MCF 10A (cell line): ENCODE measurements at regions of chr14 and their contacts with region 1.

Region 1: DNA sequence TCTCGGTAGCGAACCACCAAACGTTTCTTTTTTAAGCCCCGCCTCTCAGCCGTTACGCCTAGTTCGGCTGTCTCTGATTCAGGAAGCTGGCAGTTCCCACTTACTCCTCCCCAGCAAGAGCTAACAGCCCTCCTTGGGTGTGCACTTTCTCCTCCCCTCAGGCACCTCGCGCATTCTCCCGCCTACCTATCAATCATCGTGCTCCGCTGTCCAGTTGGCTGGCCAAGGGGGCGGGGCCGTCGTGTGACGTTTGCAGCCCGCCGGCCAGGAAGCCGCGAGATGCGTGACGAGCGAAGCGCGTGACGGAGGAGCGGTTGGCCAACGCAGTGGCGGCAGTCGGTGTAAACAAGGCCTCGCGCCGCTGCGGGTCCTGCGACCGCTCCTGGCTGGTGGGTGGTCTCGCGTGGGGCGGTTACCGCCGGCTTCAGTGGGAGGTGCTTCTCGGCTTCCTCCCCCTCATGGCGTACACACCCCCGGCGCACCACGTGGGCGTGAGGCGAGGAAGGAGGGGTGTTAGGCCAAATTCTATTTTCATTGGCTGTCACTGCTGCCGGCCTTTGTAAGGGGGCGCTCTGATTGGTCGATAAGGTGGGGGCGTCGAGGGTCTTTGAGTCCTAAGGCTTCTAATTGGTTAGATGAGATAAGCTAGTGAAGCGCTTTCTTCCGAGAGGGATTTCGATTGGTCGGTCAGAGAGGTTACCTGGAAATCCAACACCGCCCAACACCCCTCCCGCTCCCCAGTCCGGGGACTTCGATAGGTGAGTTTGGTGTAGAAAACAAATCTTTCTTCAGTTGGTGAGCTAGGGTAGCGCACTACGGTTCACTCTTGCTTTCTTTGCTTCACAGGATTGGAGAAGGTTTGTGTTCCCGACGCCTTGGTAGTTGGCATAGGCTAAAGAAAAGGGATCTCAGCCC is at the starts of genes DCAF11 and NRL:
- DNase-seq: peak; percentile 100
- H3K4me3 Mint-ChIP-seq: peak within 1 kb of the TSS; percentile 97
- H3K27ac Mint-ChIP-seq: peak within 1 kb of the TSS; percentile 99
- H3K4me1 Mint-ChIP-seq: peaks cover 9% of the 10 kb centered on the region
- H3K27me3 Mint-ChIP-seq: no peaks in the 10 kb centered on the region
- CTCF ChIP-seq: no peak
- total RNA-seq, gene DCAF11: 38.6 and 48.8 TPM in 2 replicates
- total RNA-seq, gene NRL: 1.3 and 2.1 TPM in 2 replicates

Region 2: GRCh38 chr14:23320774-23321571 is 793.8 kb before region 1 on chr14 and contains the start of gene PABPN1:
- CTCF ChIA-PET with region 1: no interaction called
- POLR2A ChIA-PET with region 1: interaction called, 11 read pairs
- intact Hi-C with region 1: no loop called
- DNase-seq: peak; percentile 100
- H3K4me3 Mint-ChIP-seq: peak within 1 kb of the TSS; percentile 84
- H3K27ac Mint-ChIP-seq: peak within 1 kb of the TSS; percentile 97
- H3K4me1 Mint-ChIP-seq: peaks cover 11% of the 10 kb centered on the region
- H3K27me3 Mint-ChIP-seq: no peaks in the 10 kb centered on the region
- CTCF ChIP-seq: no peak
- total RNA-seq, gene PABPN1: 153 and 167 TPM in 2 replicates

Region 3: GRCh38 chr14:24141097-24141880 is 26.5 kb after region 1 on chr14 and contains the start of gene EMC9:
- CTCF ChIA-PET with region 1: interaction called, 9 read pairs
- POLR2A ChIA-PET with region 1: interaction called, 252 read pairs
- intact Hi-C with region 1: loop called (anchors 2 kb)
- DNase-seq: peak; percentile 100
- H3K4me3 Mint-ChIP-seq: peak within 1 kb of the TSS; percentile 93
- H3K27ac Mint-ChIP-seq: peak within 1 kb of the TSS; percentile 64
- H3K4me1 Mint-ChIP-seq: peaks cover 21% of the 10 kb centered on the region
- H3K27me3 Mint-ChIP-seq: no peaks in the 10 kb centered on the region
- CTCF ChIP-seq: peak; percentile 14
- total RNA-seq, gene EMC9: 49.2 and 49.9 TPM in 2 replicates

Region 4: DNA sequence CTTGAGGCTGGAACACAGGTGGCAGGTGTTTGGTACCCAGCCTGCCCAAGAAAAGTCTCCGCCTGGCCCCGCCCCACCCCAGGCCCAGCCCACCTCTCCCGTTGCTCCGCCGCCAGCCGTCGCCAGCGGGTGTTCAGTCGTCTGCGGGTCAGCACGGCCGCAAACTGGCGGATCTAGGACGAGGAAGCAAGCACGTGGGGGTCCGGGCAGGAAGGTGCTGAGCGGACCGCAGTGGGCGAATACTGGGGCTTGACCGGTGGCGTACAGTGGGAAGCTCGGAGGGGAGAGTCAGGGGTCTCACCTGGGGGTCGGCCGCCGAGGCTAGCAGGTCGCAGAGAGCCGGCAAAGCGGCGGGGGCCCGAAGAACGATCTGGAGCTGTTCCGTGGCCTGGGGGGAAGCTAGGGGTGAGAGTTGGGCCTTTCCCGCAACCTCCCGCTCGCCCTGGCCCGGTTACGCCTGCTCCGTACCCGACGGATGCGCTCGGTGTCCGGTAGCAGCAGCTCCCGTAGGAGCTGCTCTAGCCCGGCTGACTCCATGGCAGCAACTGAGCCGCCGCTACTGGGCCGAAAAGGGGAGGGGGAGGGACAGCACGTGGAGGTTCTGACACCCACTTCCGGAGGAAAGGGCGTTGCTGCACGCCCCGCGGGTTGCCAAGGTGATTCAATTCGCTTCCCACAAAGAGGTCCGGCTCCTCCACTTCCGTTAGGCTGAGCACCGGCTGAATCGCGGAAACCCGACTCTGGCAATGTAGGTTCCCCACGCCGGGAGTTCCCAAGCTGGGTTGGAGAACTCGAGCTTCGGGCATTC is 73.7 kb after region 1 on chr14 and contains the start of gene IPO4:
- CTCF ChIA-PET with region 1: no interaction called
- POLR2A ChIA-PET with region 1: interaction called, 13 read pairs
- intact Hi-C with region 1: no loop called
- DNase-seq: peak; percentile 97
- H3K4me3 Mint-ChIP-seq: peak within 1 kb of the TSS; percentile 81
- H3K27ac Mint-ChIP-seq: peak within 1 kb of the TSS; percentile 84
- H3K4me1 Mint-ChIP-seq: peaks cover 12% of the 10 kb centered on the region
- H3K27me3 Mint-ChIP-seq: no peaks in the 10 kb centered on the region
- CTCF ChIP-seq: no peak
- total RNA-seq, gene IPO4: 57.2 and 100 TPM in 2 replicates

Region 5: GRCh38 chr14:24215495-24216344 is 100.9 kb after region 1 on chr14 and contains the start of gene MDP1:
- CTCF ChIA-PET with region 1: interaction called, 3 read pairs
- POLR2A ChIA-PET with region 1: interaction called, 29 read pairs
- intact Hi-C with region 1: no loop called
- DNase-seq: peak; percentile 87
- H3K4me3 Mint-ChIP-seq: peak within 1 kb of the TSS; percentile 80
- H3K27ac Mint-ChIP-seq: peak within 1 kb of the TSS; percentile 73
- H3K4me1 Mint-ChIP-seq: peaks cover 20% of the 10 kb centered on the region
- H3K27me3 Mint-ChIP-seq: no peaks in the 10 kb centered on the region
- CTCF ChIP-seq: peak; percentile 25
- total RNA-seq, gene MDP1: 11.0 and 20.2 TPM in 2 replicates

Region 6: DNA sequence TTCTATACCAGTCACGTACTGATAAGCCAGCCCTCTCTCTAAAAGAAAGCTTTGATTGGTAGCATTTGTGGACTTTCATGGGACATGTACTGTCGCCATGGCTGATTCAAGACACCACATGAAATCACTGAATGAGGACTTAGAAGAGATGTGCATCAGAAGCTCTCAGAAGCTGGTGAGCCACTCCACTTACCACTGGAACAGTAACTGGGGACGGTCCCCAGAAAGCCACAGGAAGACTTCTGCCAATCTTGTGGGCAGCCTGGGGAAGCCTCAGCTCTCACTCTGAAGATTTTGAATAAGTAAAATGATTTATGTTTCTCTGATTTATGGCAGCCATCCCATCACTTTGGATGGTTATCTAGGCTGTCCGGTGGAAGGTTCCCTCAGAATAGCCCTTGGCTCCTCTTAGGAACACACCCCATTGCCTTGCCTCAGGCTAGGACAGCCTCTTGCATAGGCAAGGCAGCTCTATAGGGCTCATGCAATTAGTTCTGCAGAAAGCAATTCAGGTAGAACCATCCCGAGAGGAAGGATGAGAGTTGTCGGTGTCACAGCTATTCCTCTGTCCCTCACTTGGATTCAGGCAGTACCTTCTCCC is 175.0 kb after region 1 on chr14:
- CTCF ChIA-PET with region 1: no interaction called
- POLR2A ChIA-PET with region 1: no interaction called
- intact Hi-C with region 1: no loop called
- DNase-seq: no peak
- H3K4me3 Mint-ChIP-seq: no peak overlapping the region
- H3K27ac Mint-ChIP-seq: peak overlapping the region; percentile 73
- H3K4me1 Mint-ChIP-seq: peaks cover 13% of the 10 kb centered on the region
- H3K27me3 Mint-ChIP-seq: no peaks in the 10 kb centered on the region
- CTCF ChIP-seq: no peak

Region 7: GRCh38 chr14:24377657-24378056 is 262.9 kb after region 1 on chr14:
- CTCF ChIA-PET with region 1: no interaction called
- POLR2A ChIA-PET with region 1: no interaction called
- intact Hi-C with region 1: no loop called
- DNase-seq: peak; percentile 29
- H3K4me3 Mint-ChIP-seq: no peak overlapping the region
- H3K27ac Mint-ChIP-seq: no peak overlapping the region
- H3K4me1 Mint-ChIP-seq: no peaks in the 10 kb centered on the region
- H3K27me3 Mint-ChIP-seq: no peaks in the 10 kb centered on the region
- CTCF ChIP-seq: no peak